K562 (cell line): ENCODE measurements at regions of chr17 and their contacts with region 1.

Region 1: DNA sequence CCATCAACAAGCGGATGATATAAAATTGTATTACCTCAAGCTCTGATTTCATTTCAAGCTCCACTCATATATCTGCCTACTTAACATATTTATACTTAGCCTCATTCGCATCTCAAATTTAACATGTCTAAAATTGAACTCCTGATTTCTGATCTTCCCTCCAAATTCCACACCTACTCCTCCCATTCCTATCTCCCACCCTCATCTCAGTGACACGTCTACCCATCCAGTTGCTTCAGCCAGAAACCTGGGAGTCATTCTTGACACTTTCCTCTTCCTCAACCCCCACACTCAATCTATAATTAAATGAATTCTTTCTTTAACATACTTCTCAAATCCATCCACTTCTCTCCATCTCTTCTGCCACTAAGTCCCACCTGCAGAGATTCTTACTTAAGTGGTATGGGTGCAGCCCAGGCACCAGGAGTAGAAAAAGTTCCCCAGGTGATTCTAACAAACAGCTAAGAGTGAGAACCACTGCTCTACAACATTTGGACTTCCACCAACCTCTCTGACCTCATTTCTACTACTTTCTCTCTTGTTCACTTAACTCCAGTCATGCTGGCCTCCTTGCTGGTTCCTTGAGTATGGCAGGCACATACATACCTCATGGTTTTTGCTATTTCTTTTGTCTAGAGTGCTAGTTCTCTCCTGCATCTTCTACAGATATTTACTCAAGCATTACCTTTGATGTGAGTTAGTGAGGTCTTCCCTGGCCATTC is 18.1 kb downstream of the SPOP start:
- DNase-seq: no peak
- ATAC-seq: no peak
- H3K4me3 ChIP-seq: no peak overlapping the region
- H3K27ac ChIP-seq: no peak overlapping the region
- H3K4me1 ChIP-seq: peaks cover 0 to 2% of the 10 kb centered on the region in 2 experiments; a peak in 3 of 5 replicates
- H3K27me3 ChIP-seq: no peaks in the 10 kb centered on the region
- CTCF ChIP-seq: no peak
- EP300 ChIP-seq: no peak
- POLR2A ChIP-seq: no peak
- RAD21 ChIP-seq: no peak

Region 2: DNA sequence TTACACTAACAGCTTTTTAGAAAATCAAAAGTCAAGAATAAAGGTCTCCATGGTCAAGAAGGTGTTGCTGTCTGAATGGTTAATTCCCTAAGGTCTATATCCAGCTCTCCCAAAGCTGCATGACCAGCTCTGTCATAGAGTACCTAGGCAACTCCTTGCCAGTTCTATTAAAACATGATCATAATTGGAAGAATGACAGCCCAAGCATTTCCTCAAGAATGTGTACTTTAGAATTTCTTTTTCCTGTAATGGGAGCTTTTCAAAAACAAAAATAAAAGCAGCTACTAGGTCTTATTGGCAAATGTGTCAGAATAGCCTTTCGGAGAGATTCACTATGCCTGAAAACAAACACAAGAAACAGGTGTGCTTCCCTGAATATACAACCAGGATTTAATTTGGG is 10.2 kb after region 1 on chr17:
- CTCF ChIA-PET with region 1: no interaction called
- POLR2A ChIA-PET with region 1: interaction called, 13 read pairs
- in situ Hi-C with region 1: no loop called
- intact Hi-C with region 1: no loop called
- DNase-seq: no peak
- ATAC-seq: no peak
- H3K4me3 ChIP-seq: no peak overlapping the region
- H3K27ac ChIP-seq: no peak overlapping the region
- H3K4me1 ChIP-seq: peaks cover 0 to 9% of the 10 kb centered on the region in 2 experiments; a peak in 2 of 5 replicates
- H3K27me3 ChIP-seq: no peaks in the 10 kb centered on the region
- CTCF ChIP-seq: no peak
- EP300 ChIP-seq: no peak
- POLR2A ChIP-seq: no peak
- RAD21 ChIP-seq: no peak

Region 3: DNA sequence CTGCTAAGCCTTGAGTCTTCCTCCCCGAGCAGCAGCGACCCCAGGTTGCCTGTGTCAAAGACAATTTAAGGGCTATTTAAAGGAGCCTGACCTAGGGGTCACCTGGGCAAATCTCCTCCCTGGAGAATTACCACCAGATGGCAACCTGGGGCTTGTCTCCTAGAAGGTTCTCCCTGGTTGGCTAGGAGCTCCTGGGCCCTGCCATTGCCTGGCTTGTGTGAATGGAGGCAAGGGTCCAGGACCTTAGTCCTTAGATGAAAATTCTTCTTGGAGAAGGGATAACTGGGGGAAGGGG is 239.3 kb after region 1 on chr17:
- CTCF ChIA-PET with region 1: no interaction called
- POLR2A ChIA-PET with region 1: no interaction called
- in situ Hi-C with region 1: no loop called
- intact Hi-C with region 1: no loop called
- DNase-seq: peak; percentile 26 to 60 (median 34)
- ATAC-seq: peak; percentile 81
- H3K4me3 ChIP-seq: no peak overlapping the region
- H3K27ac ChIP-seq: no peak overlapping the region
- H3K4me1 ChIP-seq: peaks cover 0 to 7% of the 10 kb centered on the region in 2 experiments; a peak in 1 of 5 replicates
- H3K27me3 ChIP-seq: peaks cover 23 to 57% of the 10 kb centered on the region in 2 experiments; a peak in 4 of 5 replicates
- CTCF ChIP-seq: peak; percentile 36 to 56 (median 52); a peak in 5 of 6 replicates
- EP300 ChIP-seq: no peak
- POLR2A ChIP-seq: no peak
- RAD21 ChIP-seq: peak; percentile 29 to 48; a peak in 3 of 4 replicates